Esophagus squamous epithelium (tissue), 5 donors: ENCODE measurements at regions of chr12 and their contacts with region 1.

Region 1: GRCh38 chr12:122951979-122952892 is 14.0 kb downstream of the ABCB9 start:
- DNase-seq: no peak
- H3K4me3 ChIP-seq: no peak overlapping the region
- H3K27ac ChIP-seq: no peak overlapping the region
- H3K4me1 ChIP-seq: peaks cover 3 to 21% (median 7%) of the 10 kb centered on the region in 3 donors
- H3K27me3 ChIP-seq: no peaks in the 10 kb centered on the region
- CTCF ChIP-seq: peak; percentile 75 to 92 (median 84)
- POLR2A ChIP-seq: no peak

Region 2: DNA sequence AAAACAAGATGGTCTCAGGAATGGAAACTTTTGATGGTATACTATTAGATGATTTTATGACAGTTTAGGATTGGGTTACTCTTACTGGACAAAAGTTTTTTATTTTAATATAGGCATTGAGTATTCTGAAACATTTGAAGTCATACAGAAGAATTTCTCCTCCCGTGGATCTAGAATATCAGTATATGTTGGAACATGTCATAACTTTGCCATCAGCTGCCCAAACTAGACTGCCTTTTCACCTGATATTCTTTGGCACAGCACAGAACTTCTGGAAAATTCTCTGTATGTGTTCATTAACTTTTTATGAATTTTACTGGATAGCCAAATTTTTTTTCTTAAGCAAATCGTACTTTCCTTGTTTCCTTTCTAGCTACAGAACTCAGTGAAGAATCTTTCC is 349.8 kb before region 1 on chr12:
- intact Hi-C with region 1: no loop called
- DNase-seq: no peak
- H3K4me3 ChIP-seq: no peak overlapping the region
- H3K27ac ChIP-seq: no peak overlapping the region
- H3K4me1 ChIP-seq: no peaks in the 10 kb centered on the region
- H3K27me3 ChIP-seq: no peaks in the 10 kb centered on the region
- CTCF ChIP-seq: no peak
- POLR2A ChIP-seq: no peak

Region 3: GRCh38 chr12:122793685-122794106 is 158.5 kb before region 1 on chr12:
- intact Hi-C with region 1: loop called (anchors 10 kb)
- DNase-seq: no peak
- H3K4me3 ChIP-seq: no peak overlapping the region
- H3K27ac ChIP-seq: no peak overlapping the region
- H3K4me1 ChIP-seq: no peaks in the 10 kb centered on the region
- H3K27me3 ChIP-seq: no peaks in the 10 kb centered on the region
- CTCF ChIP-seq: peak in 5 of 6 experiments; percentile 64 to 76 (median 73)
- POLR2A ChIP-seq: no peak

Region 4: GRCh38 chr12:122825773-122826724 is 126.2 kb before region 1 on chr12:
- intact Hi-C with region 1: no loop called
- DNase-seq: no peak
- H3K4me3 ChIP-seq: peak overlapping the region in 3 of 4 donors; percentile 18 to 52 (median 27)
- H3K27ac ChIP-seq: no peak overlapping the region
- H3K4me1 ChIP-seq: peaks cover 0 to 13% (median 0%) of the 10 kb centered on the region in 3 donors
- H3K27me3 ChIP-seq: peaks cover 0 to 6% (median 0%) of the 10 kb centered on the region in 4 donors
- CTCF ChIP-seq: no peak
- POLR2A ChIP-seq: no peak

Region 5: GRCh38 chr12:122860346-122861090 is 91.7 kb before region 1 on chr12:
- intact Hi-C with region 1: loop called (anchors 2 kb)
- DNase-seq: no peak
- H3K4me3 ChIP-seq: no peak overlapping the region
- H3K27ac ChIP-seq: peak overlapping the region; percentile 3 to 72 (median 44)
- H3K4me1 ChIP-seq: peaks cover 5 to 48% (median 27%) of the 10 kb centered on the region in 3 donors
- H3K27me3 ChIP-seq: no peaks in the 10 kb centered on the region
- CTCF ChIP-seq: peak; percentile 94 to 98 (median 96)
- POLR2A ChIP-seq: no peak